ENCODE measurements at regions of chr1 and their contacts with region 1.

Region 1: DNA sequence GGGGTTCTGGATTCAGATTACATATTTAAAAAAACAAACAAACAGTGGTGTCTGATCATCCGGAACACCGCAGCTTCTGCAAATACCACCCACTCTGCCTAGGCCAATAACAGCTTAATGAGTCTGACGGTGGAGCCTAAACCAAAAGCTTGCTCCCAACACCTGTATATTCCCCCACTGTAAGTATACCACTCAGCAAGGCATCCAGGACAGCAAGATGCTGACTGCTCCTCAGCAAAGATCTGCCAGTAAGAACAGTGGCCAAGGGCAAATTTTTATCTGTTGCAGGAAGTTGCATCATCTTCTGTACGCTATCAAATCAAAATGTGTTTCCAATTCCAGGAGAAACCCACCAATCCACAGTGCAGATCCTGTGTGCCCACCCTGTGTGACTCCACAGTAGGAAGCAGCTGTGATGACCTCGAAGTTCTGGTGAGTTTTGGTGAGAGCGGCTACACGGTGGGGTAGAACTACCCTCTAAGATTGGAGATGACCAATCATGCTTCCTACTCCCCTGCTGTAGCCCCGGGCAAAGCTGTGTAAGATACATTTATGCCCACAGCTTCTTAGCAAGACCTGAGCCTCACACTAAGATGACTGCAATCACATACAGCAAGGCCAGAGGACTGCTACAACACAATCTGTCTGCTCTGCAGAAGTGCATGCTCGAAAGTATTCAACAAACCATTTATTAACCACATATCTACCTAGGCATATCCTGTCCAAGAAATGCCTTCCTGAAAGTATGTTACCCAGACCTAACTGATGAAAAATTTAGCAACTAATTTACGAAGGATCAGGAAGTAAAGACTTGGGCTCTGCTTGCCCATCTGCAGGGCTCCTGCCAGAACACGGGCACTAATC is 30.5 kb downstream of the SIPA1L2 start:
- H3K4me3 ChIP-seq: no peak overlapping the region
- H3K27ac ChIP-seq: peak overlapping the region; percentile 65
- H3K4me1 ChIP-seq: peaks cover 34% of the 10 kb centered on the region
- CTCF ChIP-seq: no peak

Region 2: GRCh38 chr1:232613752-232614381 is 14.5 kb after region 1 on chr1:
- CTCF ChIA-PET with region 1: interaction called, 22 read pairs
- POLR2A ChIA-PET with region 1: interaction called, 14 read pairs
- H3K4me3 ChIP-seq: no peak overlapping the region
- H3K27ac ChIP-seq: peak overlapping the region; percentile 39
- H3K4me1 ChIP-seq: peaks cover 35% of the 10 kb centered on the region
- CTCF ChIP-seq: no peak

Region 3: GRCh38 chr1:232620356-232620969 is 21.1 kb after region 1 on chr1:
- CTCF ChIA-PET with region 1: interaction called, 8 read pairs
- POLR2A ChIA-PET with region 1: interaction called, 14 read pairs
- H3K4me3 ChIP-seq: peak overlapping the region; percentile 28
- H3K27ac ChIP-seq: peak overlapping the region; percentile 71
- H3K4me1 ChIP-seq: peaks cover 38% of the 10 kb centered on the region
- CTCF ChIP-seq: no peak

Region 4: GRCh38 chr1:232669981-232670747 is 70.8 kb after region 1 on chr1:
- CTCF ChIA-PET with region 1: no interaction called
- POLR2A ChIA-PET with region 1: no interaction called
- H3K4me3 ChIP-seq: no peak overlapping the region
- H3K27ac ChIP-seq: no peak overlapping the region; the same call in 1 of the 2 replicates
- H3K4me1 ChIP-seq: peaks cover 9% of the 10 kb centered on the region; the same call in 1 of the 2 replicates
- CTCF ChIP-seq: no peak